ENCODE measurements at regions of chr7 and their contacts with region 1.

Region 1: DNA sequence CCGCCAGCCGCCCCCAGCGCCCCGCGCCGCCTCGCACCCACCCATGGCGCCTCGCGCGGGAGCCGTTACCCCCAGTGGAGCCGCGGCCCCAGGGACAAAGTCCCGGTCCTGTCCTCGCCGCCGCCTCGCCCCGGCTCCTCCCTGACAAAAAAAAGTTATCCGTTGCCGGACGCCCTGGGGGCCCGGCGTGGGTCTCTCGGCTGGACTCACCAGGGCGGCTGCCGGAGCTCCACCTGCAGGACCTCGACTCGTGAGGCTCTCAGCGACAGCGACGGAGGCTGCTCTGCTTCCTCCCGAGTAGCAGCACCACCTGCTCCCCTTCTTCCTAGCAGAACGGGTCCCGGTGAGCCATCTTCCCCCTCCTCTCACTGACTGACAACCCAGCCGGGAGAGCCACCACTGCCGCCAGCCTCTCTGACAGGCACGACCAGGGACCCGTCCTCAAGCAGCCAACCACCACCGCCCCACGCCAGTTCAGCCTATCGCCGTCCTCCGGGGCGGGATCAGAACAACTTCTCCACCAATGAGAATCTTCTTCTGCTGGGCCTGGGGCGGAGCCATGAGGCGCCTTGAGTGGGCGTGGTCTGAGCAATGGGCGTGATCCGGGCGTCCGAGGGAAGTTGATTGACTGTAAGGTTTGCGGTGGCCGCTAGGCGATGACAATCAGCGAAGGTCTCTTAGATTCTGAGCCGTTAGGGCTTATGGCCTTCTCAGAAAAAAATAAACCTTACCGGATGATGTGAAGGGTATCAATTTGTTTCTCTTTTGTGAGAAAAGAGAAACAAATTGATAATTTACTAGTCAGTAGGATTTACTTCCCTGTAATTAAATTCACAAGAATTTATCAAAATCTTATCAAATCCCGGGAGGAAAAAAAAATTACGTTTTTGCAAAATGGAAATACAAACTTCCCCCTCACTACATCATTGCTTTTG is at the start of gene HYCC1:
- DNase-seq: peak; percentile 99
- H3K4me3 Mint-ChIP-seq: no peak within 1 kb of the TSS
- H3K27ac Mint-ChIP-seq: no peak within 1 kb of the TSS
- H3K4me1 Mint-ChIP-seq: peaks cover 15% of the 10 kb centered on the region
- H3K27me3 Mint-ChIP-seq: no peaks in the 10 kb centered on the region
- CTCF ChIP-seq: peak; percentile 45
- total RNA-seq, gene HYCC1: 48.9 and 49.1 TPM in 2 replicates

Region 2: GRCh38 chr7:22854158-22855048 is 159.6 kb before region 1 on chr7:
- CTCF ChIA-PET with region 1: interaction called, 3 read pairs
- POLR2A ChIA-PET with region 1: interaction called, 35 read pairs
- intact Hi-C with region 1: loop called (anchors 1 kb)
- DNase-seq: peak; percentile 91
- H3K4me3 Mint-ChIP-seq: peak overlapping the region; percentile 90
- H3K27ac Mint-ChIP-seq: peak overlapping the region; percentile 52
- H3K4me1 Mint-ChIP-seq: peaks cover 19% of the 10 kb centered on the region
- H3K27me3 Mint-ChIP-seq: no peaks in the 10 kb centered on the region
- CTCF ChIP-seq: peak; percentile 86

Region 3: GRCh38 chr7:22860784-22861482 is 153.0 kb before region 1 on chr7:
- CTCF ChIA-PET with region 1: no interaction called
- POLR2A ChIA-PET with region 1: interaction called, 35 read pairs
- intact Hi-C with region 1: no loop called
- DNase-seq: peak; percentile 48
- H3K4me3 Mint-ChIP-seq: no peak overlapping the region
- H3K27ac Mint-ChIP-seq: no peak overlapping the region
- H3K4me1 Mint-ChIP-seq: peaks cover 28% of the 10 kb centered on the region
- H3K27me3 Mint-ChIP-seq: no peaks in the 10 kb centered on the region
- CTCF ChIP-seq: peak; percentile 46

Region 4: DNA sequence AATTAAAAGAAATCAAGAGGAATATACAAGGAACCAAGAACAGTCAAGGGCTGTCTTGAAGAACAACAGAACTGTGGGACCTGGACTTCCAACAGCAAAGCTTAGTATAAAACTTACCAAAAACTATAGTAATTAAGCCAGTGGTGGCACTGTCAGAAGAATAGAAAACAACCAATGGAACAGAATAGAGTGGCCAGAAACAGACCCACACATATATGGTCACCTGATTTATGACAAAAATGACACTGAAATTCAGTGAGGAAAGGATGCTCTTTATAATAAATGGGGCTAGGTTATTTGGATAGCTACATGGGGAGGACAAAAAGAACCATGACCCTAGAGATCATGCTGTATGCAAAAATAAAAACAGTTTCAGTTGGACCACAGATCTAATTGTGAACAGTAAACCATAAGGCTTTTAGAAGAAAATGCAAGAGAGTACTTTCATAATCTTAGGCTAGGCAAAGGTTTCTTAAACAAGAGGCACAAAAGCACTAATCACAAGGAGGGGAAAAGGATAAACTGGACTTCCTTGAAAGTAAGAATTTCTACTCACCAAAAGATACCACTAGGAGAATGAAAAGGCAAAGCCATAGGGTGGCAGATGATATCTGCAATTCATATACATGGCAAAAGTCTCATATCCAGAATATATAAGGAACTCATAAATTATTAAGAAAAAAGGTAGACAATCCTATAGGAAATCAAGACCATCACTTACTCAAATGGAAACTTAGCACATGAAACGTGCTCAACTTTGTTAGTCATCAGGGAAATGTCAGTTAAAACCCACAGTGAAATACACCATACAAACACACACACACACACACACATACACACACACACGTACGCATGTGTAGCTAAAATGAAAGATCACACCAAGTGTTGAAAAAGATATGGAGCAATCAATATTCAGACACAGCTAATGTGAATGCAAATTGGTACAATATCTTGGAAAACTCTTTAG is 20.8 kb before region 1 on chr7:
- CTCF ChIA-PET with region 1: interaction called, 4 read pairs
- POLR2A ChIA-PET with region 1: interaction called, 37 read pairs
- intact Hi-C with region 1: no loop called
- DNase-seq: no peak
- H3K4me3 Mint-ChIP-seq: no peak overlapping the region
- H3K27ac Mint-ChIP-seq: no peak overlapping the region
- H3K4me1 Mint-ChIP-seq: peaks cover 15% of the 10 kb centered on the region
- H3K27me3 Mint-ChIP-seq: no peaks in the 10 kb centered on the region
- CTCF ChIP-seq: no peak